ENCODE measurements at regions of chr20 and their contacts with region 1.

Region 1: DNA sequence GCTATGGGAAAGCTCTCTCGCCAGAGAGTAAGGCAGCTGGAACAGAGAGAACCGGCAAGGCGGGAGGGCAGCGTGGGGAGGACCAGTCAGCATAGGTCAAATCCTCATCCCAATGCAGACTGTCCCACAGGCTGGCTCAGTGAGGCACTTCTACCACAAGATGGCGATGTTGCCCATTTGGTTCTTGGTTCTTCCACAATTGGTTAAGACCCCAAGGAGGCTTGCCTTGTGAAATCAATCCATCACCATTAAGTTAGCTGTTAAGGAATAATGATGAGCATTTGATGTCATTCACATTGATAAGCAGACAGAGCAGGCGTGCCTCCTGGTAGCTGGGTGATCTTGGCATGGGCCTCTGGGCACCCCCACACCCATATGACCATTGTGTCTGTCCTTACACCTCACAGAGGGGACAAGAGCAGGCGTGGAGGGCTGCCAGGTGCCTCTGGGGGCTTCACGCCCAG is 2.4 kb downstream of the CSTL1 start:
- DNase-seq: peak; percentile 44 to 75 (median 69)
- ATAC-seq: peak; percentile 80 to 82
- H3K4me3 ChIP-seq: no peak overlapping the region
- H3K27ac ChIP-seq: no peak overlapping the region
- H3K4me1 ChIP-seq: no peaks in the 10 kb centered on the region
- H3K27me3 ChIP-seq: no peaks in the 10 kb centered on the region

Region 2: DNA sequence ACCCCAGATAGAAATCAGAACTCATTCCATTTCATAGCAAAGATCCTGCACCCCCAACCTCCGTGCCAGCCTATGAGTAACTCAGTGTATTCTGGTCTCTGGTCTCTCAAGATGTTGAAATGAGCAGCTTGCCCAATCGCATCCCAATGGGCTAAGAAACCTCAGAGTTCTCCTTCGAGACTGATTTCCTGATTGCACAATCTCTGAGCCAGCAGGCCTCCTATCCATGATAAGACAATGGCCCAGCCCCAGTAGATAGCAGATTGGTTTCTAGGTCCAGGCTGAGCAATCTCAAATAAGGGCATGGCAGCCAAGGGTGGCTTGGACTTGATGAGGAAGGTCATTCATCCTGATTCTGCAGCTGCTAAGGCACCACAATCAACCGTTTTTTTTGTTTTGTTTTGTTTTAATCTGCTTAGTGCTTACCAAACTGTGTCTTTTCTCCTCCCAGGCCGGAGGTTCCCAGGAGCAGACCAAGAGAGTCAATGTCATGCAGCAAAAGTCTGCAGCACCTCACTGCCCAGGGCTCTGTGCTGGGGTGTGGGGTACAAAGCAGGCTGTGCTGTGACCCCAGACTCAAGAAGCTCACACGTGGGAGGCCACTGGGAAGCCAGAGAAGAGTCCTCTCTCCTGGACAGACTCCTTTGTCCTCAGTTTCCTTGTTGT is 216.3 kb before region 1 on chr20:
- intact Hi-C with region 1: no loop called
- DNase-seq: peak; percentile 67 to 82 (median 80)
- ATAC-seq: peak; percentile 91 to 94
- H3K4me3 ChIP-seq: no peak overlapping the region
- H3K27ac ChIP-seq: no peak overlapping the region
- H3K4me1 ChIP-seq: peaks cover 3% of the 10 kb centered on the region
- H3K27me3 ChIP-seq: no peaks in the 10 kb centered on the region

Region 3: DNA sequence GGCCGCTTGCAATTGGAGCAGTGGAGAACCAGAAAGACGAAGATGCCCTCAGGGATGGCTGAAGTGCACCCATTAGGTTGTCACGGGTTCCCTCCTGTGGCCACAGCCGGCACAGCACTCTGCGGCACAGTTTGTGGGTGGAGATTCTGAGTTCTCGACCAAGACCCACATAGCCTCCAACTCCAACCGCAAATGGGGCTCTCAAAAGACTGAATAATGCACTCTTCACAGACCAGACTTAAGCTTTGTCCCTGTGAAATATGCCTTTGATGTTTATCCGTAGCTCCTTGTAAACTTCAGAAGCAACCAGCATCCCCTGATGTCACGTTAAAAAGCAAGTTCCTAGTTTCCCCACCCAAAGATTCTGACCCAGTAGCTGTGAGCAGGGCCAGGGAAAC is 164.8 kb after region 1 on chr20:
- intact Hi-C with region 1: loop called (anchors 5 to 10 kb)
- DNase-seq: peak; percentile 79 to 93 (median 93)
- ATAC-seq: peak; percentile 86 to 92
- H3K4me3 ChIP-seq: no peak overlapping the region
- H3K27ac ChIP-seq: no peak overlapping the region
- H3K4me1 ChIP-seq: no peaks in the 10 kb centered on the region
- H3K27me3 ChIP-seq: no peaks in the 10 kb centered on the region